ENCODE measurements at regions of chr17 and their contacts with region 1.

Region 1: DNA sequence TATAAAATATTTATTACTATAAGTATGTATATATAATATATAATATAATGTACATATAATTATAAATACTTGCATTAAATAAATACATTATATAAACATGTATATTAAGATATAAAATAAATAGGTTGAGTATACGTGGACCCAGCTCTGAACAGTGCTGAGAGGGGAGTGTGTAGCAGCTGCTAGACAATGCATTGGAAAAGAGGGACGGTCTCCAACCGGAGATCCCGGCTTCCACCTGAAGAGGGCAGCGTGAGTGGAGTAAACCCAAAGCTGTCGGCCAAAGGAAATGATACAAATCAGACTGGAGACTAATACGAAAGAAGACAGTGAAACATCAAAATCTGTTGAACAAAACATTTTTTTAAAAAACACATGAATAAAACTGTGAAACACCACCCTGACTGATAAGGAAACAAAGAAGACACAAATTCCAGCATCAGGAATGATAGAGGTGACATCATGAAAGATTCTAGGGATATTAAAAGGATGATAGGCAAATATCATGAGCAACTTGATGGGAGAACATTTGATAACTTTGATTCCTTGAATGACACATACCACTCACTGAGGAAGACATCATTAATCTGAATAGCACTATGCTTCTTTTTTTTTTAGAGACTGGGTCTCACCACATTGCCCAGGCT is 125.4 kb upstream of the CHMP6 start:
- DNase-seq: peak; percentile 51
- ATAC-seq: peak; percentile 89
- H3K4me3 Mint-ChIP-seq: no peak overlapping the region
- H3K27ac Mint-ChIP-seq: no peak overlapping the region
- H3K4me1 Mint-ChIP-seq: peaks cover 18% of the 10 kb centered on the region
- H3K27me3 Mint-ChIP-seq: no peaks in the 10 kb centered on the region
- CTCF ChIP-seq: no peak

Region 2: DNA sequence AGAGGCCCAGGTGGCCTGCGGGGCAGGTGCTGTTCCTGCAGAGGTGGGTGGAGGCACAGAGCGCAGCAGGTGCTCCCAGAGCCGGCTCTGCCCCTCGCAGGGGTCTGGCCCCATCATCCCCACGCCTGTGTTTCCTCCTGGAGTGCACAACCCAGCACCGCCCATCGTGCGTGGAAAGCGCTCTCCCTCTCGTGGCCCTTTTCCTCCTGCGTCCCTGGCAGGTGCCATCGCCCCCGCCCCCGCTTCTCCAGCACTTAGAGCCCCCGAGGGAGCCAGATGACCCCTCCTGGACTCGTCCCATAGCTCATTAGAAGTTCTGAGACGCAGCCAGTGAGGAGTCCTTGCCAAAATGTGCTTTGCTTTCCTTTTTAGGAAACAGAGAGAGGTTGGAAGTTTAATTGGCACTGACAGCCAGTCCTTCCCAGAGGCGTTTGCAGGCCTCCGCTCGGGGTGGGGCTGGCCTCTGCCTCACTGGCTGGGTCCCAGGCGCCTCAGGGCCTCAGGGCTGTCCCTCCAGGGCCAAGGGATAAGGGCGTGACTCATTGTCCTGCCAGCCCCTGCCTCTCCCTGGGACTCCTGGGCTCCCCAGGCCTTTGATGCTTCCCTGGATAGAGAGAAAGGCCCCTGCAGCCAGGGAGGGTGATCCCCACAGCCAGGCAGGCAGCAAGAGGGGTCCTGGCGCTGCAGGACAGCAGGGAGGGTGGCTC is 93.2 kb after region 1 on chr17:
- CTCF ChIA-PET with region 1: interaction called, 3 read pairs
- POLR2A ChIA-PET with region 1: no interaction called
- intact Hi-C with region 1: loop called (anchors 1 kb)
- DNase-seq: no peak
- ATAC-seq: no peak
- H3K4me3 Mint-ChIP-seq: no peak overlapping the region
- H3K27ac Mint-ChIP-seq: no peak overlapping the region
- H3K4me1 Mint-ChIP-seq: peaks cover 14% of the 10 kb centered on the region
- H3K27me3 Mint-ChIP-seq: no peaks in the 10 kb centered on the region
- CTCF ChIP-seq: no peak

Region 3: DNA sequence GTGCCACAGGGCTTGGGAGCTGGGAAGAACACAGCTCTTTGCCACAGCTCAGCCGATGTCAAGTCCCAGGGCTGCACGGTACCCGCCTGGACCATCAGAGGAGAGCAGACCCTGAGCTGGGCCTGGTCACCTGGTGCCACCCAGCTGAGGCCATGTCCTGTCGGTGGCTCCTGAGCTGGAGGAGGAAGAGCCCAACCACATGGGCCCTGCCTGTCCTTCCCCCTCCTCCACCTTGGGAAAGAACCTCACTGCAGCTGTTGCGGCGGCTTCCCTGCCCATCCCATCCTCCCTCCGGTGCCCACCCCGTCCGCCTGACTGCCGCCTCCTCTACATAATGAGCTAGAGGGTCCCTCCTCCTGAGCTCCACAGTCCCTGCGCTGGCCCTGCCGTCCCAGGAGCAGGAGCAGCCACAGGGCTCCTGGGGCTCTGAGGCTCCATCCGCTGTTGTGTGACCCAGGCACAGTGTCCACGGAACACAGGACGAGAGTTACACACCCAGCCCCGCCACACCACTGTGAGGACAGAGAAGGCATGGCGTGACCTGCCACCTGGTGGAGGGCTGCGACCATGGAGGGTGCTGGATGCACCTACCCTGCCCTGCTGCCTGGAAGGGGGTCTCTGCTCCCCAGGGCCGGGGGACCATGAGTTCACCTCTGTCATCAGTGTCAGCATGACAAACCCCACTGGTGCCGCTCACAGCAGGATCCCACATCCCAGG is 103.9 kb after region 1 on chr17:
- CTCF ChIA-PET with region 1: interaction called, 36 read pairs
- POLR2A ChIA-PET with region 1: no interaction called
- intact Hi-C with region 1: loop called (anchors 1 kb)
- DNase-seq: peak; percentile 58
- ATAC-seq: peak; percentile 91
- H3K4me3 Mint-ChIP-seq: peak overlapping the region; percentile 41
- H3K27ac Mint-ChIP-seq: peak overlapping the region; percentile 24
- H3K4me1 Mint-ChIP-seq: peaks cover 19% of the 10 kb centered on the region
- H3K27me3 Mint-ChIP-seq: peaks cover 4% of the 10 kb centered on the region
- CTCF ChIP-seq: no peak

Region 4: GRCh38 chr17:80981062-80981902 is 115.0 kb after region 1 on chr17:
- CTCF ChIA-PET with region 1: interaction called, 5 read pairs
- POLR2A ChIA-PET with region 1: no interaction called
- intact Hi-C with region 1: loop called (anchors 1 kb)
- DNase-seq: peak; percentile 61
- ATAC-seq: peak; percentile 74
- H3K4me3 Mint-ChIP-seq: peak overlapping the region; percentile 2
- H3K27ac Mint-ChIP-seq: no peak overlapping the region
- H3K4me1 Mint-ChIP-seq: peaks cover 7% of the 10 kb centered on the region
- H3K27me3 Mint-ChIP-seq: peaks cover 15% of the 10 kb centered on the region
- CTCF ChIP-seq: peak; percentile 19

Measured in activated B cell treated with CpG ODN at 0.5 μM for 24 hours (primary cell).